ENCODE measurements at regions of chr1 and their contacts with region 1.

Region 1: GRCh38 chr1:29124366-29125236 is 898 bp upstream of the TMEM200B start:
- DNase-seq: peak; percentile 56
- ATAC-seq: peak; percentile 49
- H3K4me3 Mint-ChIP-seq: peak overlapping the region; percentile 79
- H3K27ac Mint-ChIP-seq: no peak overlapping the region
- H3K4me1 Mint-ChIP-seq: peaks cover 19% of the 10 kb centered on the region
- H3K27me3 Mint-ChIP-seq: peaks cover 10% of the 10 kb centered on the region
- CTCF ChIP-seq: no peak

Region 2: DNA sequence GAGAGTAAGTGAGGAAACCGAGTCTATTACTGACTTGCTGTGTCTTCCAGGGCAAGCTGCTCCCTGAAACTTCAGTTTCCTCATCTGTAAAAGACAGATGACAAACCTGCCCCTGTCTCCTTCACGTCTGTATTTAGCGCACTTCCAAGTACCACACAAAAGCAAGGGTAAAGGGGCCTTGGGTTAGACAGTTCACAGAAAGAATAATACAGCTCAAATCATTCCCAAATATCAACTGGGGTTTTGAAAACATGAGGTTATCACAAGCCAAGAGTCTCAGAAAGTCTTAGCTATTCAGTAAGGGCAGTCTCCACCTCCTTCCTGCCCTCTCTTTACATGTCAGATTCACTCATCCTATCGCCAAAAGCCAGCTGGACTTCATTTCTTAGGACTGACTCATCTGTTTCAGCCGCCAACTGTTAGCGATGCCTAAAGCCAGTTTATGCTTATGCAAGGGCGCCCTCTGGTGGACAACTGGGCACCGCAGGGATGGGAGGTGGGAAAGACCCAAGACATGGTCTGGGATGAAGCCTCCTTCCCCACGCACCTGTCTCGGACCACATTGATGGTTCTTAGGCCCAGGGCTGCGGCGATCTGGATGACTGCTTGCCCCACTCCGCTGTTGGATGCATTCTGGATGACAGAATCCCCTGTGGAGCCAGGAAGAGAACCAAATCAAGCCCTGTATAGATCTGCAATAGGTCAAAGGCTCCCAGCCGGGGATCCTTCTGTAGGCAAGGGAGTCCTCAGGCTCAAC is 78.2 kb after region 1 on chr1:
- CTCF ChIA-PET with region 1: interaction called, 7 read pairs
- POLR2A ChIA-PET with region 1: no interaction called
- intact Hi-C with region 1: loop called (anchors 1 kb)
- DNase-seq: peak; percentile 80
- ATAC-seq: peak; percentile 98
- H3K4me3 Mint-ChIP-seq: no peak overlapping the region
- H3K27ac Mint-ChIP-seq: no peak overlapping the region
- H3K4me1 Mint-ChIP-seq: peaks cover 3% of the 10 kb centered on the region
- H3K27me3 Mint-ChIP-seq: no peaks in the 10 kb centered on the region
- CTCF ChIP-seq: no peak